Endothelial cell of umbilical vein (primary cell): ENCODE measurements at regions of chr4 and their contacts with region 1.

Region 1: GRCh38 chr4:98626350-98626749 is 32.1 kb downstream of the TSPAN5 start:
- DNase-seq: peak; percentile 91
- H3K4me3 ChIP-seq: peak overlapping the region in 1 of 3 experiments; percentile 0
- H3K27ac ChIP-seq: peak overlapping the region; percentile 74
- H3K4me1 ChIP-seq: peaks cover 45% of the 10 kb centered on the region
- H3K27me3 ChIP-seq: no peaks in the 10 kb centered on the region
- CTCF ChIP-seq: peak in 1 of 2 donors; percentile 4
- POLR2A ChIP-seq: peak; percentile 25

Region 2: GRCh38 chr4:98482847-98483806 is 143.2 kb before region 1 on chr4:
- CTCF ChIA-PET with region 1: no interaction called
- POLR2A ChIA-PET with region 1: no interaction called
- dilution Hi-C with region 1: no loop called
- intact Hi-C with region 1: loop called (anchors 5 kb)
- DNase-seq: peak; percentile 51
- H3K4me3 ChIP-seq: no peak overlapping the region
- H3K27ac ChIP-seq: peak overlapping the region; percentile 65
- H3K4me1 ChIP-seq: peaks cover 22% of the 10 kb centered on the region
- H3K27me3 ChIP-seq: no peaks in the 10 kb centered on the region
- CTCF ChIP-seq: no peak
- POLR2A ChIP-seq: no peak

Region 3: DNA sequence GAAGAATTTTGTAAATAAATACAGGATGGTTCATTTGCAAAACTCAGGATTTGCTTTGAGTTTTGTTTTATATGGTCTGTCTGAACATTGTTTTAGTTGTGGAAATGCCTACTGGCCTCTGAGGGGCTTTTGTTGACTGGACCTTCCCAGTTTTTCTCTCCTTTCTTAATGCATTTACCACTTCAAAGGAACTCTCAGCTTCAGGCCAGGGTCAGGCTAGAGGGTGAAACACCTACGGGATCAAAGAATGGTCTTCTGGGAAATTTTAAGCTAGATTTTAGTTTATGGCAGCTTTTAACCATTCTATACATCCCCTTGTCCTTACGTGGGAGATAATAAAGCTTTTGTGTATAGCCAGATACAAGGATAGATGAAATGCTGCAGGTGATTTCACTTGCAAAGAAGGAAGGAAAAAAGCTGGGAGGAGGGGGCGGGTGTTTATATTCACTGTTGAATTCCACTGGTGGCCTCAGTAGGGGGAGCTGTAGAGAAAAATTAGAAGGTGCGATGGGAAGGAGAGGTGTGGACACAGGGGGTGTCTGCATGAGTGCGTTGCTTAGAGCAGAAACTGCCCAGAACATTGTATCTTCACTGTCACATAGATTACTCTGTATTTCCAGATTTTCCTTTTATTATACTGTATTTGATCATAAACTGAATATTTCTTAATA is 119.8 kb before region 1 on chr4:
- CTCF ChIA-PET with region 1: interaction called, 4 read pairs
- POLR2A ChIA-PET with region 1: no interaction called
- dilution Hi-C with region 1: no loop called
- intact Hi-C with region 1: loop called (anchors 5 kb)
- DNase-seq: peak; percentile 23
- H3K4me3 ChIP-seq: no peak overlapping the region
- H3K27ac ChIP-seq: no peak overlapping the region
- H3K4me1 ChIP-seq: no peaks in the 10 kb centered on the region
- H3K27me3 ChIP-seq: no peaks in the 10 kb centered on the region
- CTCF ChIP-seq: peak; percentile 15 to 22
- POLR2A ChIP-seq: no peak

Region 4: DNA sequence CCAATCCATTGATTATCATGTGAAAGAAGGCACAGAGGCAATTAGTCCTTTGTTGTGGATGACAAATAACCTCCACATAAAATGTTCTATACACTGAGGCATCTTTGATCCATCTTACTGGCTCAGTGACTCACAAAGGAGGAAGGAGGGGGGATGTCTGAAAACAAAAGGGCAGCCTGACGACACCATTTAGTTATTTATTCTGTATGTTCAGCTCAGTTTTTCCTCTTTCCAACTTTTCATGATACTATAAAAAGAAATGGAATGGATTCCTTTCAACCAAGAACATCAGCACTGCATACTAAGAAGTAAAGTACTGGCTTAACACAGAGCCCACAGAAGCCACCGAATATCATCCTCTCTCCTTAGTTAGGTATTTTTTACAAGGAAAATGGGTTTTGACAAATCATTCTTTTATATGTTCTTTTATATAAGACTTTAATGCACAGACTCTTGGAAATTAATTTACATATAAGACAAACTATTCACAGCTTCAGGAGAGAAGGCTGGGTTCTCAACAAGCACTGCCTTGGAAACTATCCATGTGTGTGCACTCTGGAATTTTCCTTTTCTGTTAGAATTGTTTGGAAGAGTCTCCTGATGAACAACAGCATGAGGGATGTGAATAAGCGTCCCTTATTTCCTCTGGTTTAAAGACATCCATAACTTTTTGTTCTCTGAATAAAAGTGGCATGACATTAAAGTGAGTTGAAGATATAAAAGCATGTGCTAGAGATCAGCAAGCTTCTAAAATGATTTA is 103.5 kb before region 1 on chr4:
- CTCF ChIA-PET with region 1: no interaction called
- POLR2A ChIA-PET with region 1: no interaction called
- dilution Hi-C with region 1: no loop called
- intact Hi-C with region 1: loop called (anchors 1 kb)
- DNase-seq: peak; percentile 91
- H3K4me3 ChIP-seq: peak overlapping the region in 1 of 3 experiments; percentile 45
- H3K27ac ChIP-seq: peak overlapping the region; percentile 97
- H3K4me1 ChIP-seq: peaks cover 52% of the 10 kb centered on the region
- H3K27me3 ChIP-seq: no peaks in the 10 kb centered on the region
- CTCF ChIP-seq: no peak
- POLR2A ChIP-seq: no peak

Region 5: GRCh38 chr4:98642991-98643426 is 16.7 kb after region 1 on chr4:
- CTCF ChIA-PET with region 1: interaction called, 6 read pairs
- POLR2A ChIA-PET with region 1: interaction called, 3 read pairs
- dilution Hi-C with region 1: no loop called
- intact Hi-C with region 1: loop called (anchors 2 kb)
- DNase-seq: peak; percentile 85
- H3K4me3 ChIP-seq: no peak overlapping the region
- H3K27ac ChIP-seq: peak overlapping the region; percentile 23
- H3K4me1 ChIP-seq: peaks cover 30% of the 10 kb centered on the region
- H3K27me3 ChIP-seq: no peaks in the 10 kb centered on the region
- CTCF ChIP-seq: no peak
- POLR2A ChIP-seq: no peak

Region 6: GRCh38 chr4:98688411-98689290 is 62.3 kb after region 1 on chr4:
- CTCF ChIA-PET with region 1: interaction called, 3 read pairs
- POLR2A ChIA-PET with region 1: no interaction called
- dilution Hi-C with region 1: no loop called
- intact Hi-C with region 1: loop called (anchors 1 kb)
- DNase-seq: peak; percentile 90
- H3K4me3 ChIP-seq: peak overlapping the region in 1 of 3 experiments; percentile 34
- H3K27ac ChIP-seq: peak overlapping the region; percentile 85
- H3K4me1 ChIP-seq: peaks cover 59% of the 10 kb centered on the region
- H3K27me3 ChIP-seq: no peaks in the 10 kb centered on the region
- CTCF ChIP-seq: no peak
- POLR2A ChIP-seq: no peak